Activated B cell treated with CpG ODN at 0.5 μM for 24 hours (primary cell): ENCODE measurements at regions of chr7 and their contacts with region 1.

Region 1: DNA sequence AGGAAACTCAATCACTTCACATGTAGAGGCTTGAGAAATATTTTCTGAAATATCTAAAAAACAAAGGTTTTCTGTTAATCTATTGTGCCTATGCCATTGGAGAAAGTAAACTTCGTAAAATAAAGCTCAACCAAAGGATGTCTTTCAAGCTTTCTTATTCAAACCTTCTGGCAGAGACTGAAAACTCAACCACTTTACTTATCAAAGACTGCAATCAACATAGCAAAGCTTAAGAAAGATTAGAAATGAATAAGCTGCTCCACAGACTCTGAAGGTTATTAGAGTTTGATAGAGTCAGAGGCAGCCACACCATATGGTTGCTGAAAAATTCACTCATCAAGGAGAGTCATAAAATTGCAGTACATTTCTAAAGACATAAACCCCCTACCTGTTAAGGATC is 245.8 kb upstream of the MEOX2 start:
- DNase-seq: no peak
- ATAC-seq: no peak
- H3K4me3 Mint-ChIP-seq: no peak overlapping the region
- H3K27ac Mint-ChIP-seq: no peak overlapping the region
- H3K4me1 Mint-ChIP-seq: no peaks in the 10 kb centered on the region
- H3K27me3 Mint-ChIP-seq: no peaks in the 10 kb centered on the region
- CTCF ChIP-seq: no peak

Region 2: DNA sequence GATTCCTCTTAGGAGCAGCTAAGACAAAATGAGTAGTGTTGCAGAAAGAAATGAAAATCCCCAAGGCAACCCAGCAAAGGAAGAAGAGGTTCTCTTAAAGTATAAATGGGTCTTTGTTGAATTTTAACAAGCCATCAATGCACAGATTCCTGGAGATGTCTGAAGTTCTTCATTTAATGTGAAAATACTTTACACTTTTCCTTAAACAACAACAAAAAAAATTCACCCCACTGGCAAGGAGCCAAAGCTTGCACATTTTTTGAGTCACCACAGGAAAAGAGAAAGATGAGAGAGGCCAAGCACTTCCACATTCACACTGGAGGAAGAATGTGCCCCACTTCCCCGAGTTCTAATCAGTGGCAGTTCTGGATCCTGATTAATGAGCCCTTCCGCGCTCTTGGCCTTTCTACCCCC is 40.6 kb after region 1 on chr7:
- CTCF ChIA-PET with region 1: no interaction called
- POLR2A ChIA-PET with region 1: no interaction called
- intact Hi-C with region 1: loop called (anchors 5 kb)
- DNase-seq: no peak
- ATAC-seq: no peak
- H3K4me3 Mint-ChIP-seq: no peak overlapping the region
- H3K27ac Mint-ChIP-seq: no peak overlapping the region
- H3K4me1 Mint-ChIP-seq: no peaks in the 10 kb centered on the region
- H3K27me3 Mint-ChIP-seq: no peaks in the 10 kb centered on the region
- CTCF ChIP-seq: no peak